ENCODE measurements at regions of chr1 and their contacts with region 1.

Region 1: DNA sequence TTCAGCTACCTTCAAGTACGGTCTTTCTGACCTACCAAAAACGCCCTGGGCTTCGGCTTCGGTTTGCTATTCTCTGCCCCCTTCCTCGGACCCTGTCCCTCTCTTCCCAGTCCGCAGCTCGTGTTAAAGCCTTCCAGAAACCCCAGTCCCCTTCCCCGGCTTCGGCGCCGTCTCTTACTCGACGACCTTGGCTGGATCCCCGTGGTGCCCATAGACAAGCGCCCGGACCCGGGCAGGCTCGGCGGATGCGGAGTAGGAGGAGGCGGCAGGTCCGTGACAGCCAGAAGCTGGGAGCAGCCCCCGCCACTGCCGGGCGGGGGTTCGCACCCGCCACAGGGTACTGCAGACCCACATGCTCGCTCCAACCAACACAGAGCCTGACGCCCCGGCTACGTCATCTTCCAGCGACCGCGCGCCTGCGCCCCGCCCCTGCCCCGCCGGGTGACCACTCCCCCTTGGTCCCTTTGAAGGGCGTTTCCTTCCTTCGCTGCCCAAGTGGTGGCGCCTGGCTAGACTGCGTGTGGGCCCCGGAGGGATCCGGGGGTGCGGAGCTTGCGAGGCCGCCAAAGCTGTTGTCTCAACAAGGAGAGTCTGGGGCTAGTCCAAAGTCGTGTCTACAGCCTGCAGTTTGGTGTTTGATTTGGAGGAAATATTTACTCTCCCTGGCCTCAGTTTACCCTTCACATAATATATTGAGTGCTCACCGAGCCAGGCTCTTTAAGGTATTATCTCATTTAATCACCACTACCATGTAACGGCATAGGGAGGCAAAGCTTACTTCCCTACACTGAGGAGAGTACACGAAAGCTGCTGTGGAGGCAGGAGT is at the start of gene MECR:
- DNase-seq: peak; percentile 92 to 98 (median 95)
- H3K4me3 ChIP-seq: peak within 1 kb of the TSS; percentile 59 to 97 (median 85)
- H3K27ac ChIP-seq: peak within 1 kb of the TSS in 44 of 59 donors; percentile 7 to 89 (median 66)
- H3K27me3 ChIP-seq: no peaks in the 10 kb centered on the region
- CTCF ChIP-seq: peak in 55 of 56 donors; percentile 18 to 70 (median 52)
- total RNA-seq, gene MECR: 28.4 to 65.3 (median 45.9) TPM

Region 2: GRCh38 chr1:29195881-29196291 is 34.9 kb before region 1 on chr1:
- intact Hi-C with region 1: no loop called
- DNase-seq: no peak
- H3K4me3 ChIP-seq: no peak overlapping the region
- H3K27ac ChIP-seq: no peak overlapping the region
- H3K27me3 ChIP-seq: no peaks in the 10 kb centered on the region
- CTCF ChIP-seq: no peak

Region 3: GRCh38 chr1:29851691-29852090 is 620.9 kb after region 1 on chr1:
- intact Hi-C with region 1: loop called in 1 of 2 experiments (anchors 10 kb)
- DNase-seq: no peak
- H3K4me3 ChIP-seq: no peak overlapping the region
- H3K27ac ChIP-seq: no peak overlapping the region
- H3K27me3 ChIP-seq: peaks cover 0 to 67% (median 6%) of the 10 kb centered on the region in 45 donors
- CTCF ChIP-seq: no peak

Measured in dorsolateral prefrontal cortex (tissue), 120 donors.